WTC11 (cell line): ENCODE measurements at regions of chr17 and their contacts with region 1.

Region 1: DNA sequence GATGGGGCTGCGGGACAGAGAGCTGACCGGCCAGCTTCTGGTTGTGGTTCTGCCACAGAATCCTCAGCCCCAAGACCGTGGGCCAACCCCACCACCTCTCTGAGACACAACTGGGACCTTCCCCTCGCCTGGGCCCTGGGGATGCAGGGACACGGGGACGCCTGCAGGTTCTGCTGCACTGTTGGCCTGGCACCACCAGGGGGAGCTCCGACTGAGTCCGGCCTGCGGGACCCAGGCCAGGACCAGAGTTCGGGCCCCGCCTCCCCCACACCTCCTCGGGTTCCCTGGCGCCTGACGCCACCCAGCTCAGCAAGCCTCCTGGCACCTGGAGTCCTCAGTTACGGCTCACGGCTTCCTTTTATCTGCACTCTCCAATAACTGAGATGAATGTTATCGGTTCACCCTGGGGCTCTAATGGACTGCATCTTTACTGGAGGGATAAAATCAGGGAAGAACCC is 27.3 kb downstream of the TBC1D16 start:
- DNase-seq: peak; percentile 94
- ATAC-seq: peak; percentile 87
- H3K4me3 Mint-ChIP-seq: no peak overlapping the region
- H3K27ac Mint-ChIP-seq: no peak overlapping the region
- H3K4me1 Mint-ChIP-seq: peaks cover 5% of the 10 kb centered on the region
- H3K27me3 Mint-ChIP-seq: no peaks in the 10 kb centered on the region
- CTCF ChIP-seq: peak; percentile 94

Region 2: DNA sequence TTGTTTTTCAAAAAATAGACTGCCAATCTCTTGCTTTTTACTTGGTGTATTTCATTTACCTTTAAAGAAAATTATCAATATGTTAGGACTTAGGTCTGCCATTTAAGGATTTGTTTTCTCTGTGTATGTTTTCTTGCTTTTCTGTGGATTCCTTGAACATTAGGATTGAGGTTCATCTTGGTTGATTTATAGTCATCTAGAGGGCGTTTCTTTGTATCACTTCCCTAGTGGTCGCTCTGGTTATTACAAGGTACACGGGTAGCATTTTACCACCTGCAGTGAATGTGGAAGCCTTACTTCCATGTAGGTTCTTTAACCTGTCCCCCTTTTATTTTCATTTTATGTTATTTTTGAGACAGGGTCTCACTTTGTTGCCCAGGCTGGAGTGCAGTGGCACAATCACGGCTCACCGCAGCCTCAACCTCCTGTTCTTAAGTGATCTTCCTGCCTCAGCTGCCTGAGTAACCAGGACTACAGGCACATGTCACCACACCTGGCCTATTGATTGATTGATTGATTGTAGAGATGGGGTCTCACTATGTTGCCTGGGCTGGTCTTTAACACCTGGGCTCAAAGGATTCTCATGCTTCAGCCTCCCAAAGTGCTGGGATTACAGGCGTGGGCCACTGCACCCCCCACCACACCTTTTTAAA is 134.0 kb before region 1 on chr17:
- CTCF ChIA-PET with region 1: no interaction called
- POLR2A ChIA-PET with region 1: no interaction called
- DNase-seq: no peak
- ATAC-seq: peak; percentile 62; the same call in 1 of the 2 replicates
- H3K4me3 Mint-ChIP-seq: no peak overlapping the region
- H3K27ac Mint-ChIP-seq: no peak overlapping the region
- H3K4me1 Mint-ChIP-seq: peaks cover 6% of the 10 kb centered on the region; the same call in 1 of the 2 replicates
- H3K27me3 Mint-ChIP-seq: peaks cover 4% of the 10 kb centered on the region; the same call in 1 of the 2 replicates
- CTCF ChIP-seq: no peak; the same call in 1 of the 2 replicates

Region 3: GRCh38 chr17:79977708-79978547 is 30.5 kb before region 1 on chr17:
- CTCF ChIA-PET with region 1: interaction called, 13 read pairs
- POLR2A ChIA-PET with region 1: interaction called, 4 read pairs
- DNase-seq: no peak
- ATAC-seq: no peak
- H3K4me3 Mint-ChIP-seq: no peak overlapping the region
- H3K27ac Mint-ChIP-seq: no peak overlapping the region
- H3K4me1 Mint-ChIP-seq: peaks cover 15% of the 10 kb centered on the region
- H3K27me3 Mint-ChIP-seq: no peaks in the 10 kb centered on the region
- CTCF ChIP-seq: no peak

Region 4: DNA sequence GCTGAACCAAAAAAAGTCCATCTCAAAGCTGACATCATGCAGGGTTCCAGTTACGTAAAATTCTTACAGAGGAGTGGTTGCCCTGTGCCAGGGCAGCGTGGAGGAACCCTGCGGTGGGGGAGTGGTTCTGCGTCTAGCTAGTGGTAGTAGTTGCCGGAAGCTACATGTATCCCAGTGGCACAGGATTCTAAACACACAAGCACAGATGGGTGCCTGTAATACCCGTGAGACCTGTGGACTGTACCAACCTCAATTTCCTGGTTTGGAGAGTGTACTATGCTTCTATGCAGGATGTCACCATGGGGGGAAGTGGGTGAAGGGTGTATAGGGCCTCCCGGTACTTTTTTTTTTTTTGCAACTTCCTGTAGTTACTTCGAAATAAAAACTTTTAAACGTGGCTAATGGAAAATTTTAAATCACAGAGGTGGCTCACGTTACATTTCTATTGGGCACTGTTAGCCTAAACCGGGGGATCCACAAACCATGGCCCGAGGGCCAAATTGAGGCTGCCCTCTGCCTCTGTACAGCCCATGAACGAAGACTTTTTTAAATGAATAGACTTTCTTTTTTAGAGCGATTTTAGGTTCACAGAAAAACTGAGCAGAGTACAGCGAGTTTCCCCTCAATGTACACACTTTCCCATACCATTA is 11.3 kb before region 1 on chr17:
- CTCF ChIA-PET with region 1: interaction called, 42 read pairs
- POLR2A ChIA-PET with region 1: interaction called, 5 read pairs
- DNase-seq: no peak
- ATAC-seq: no peak; the same call in 1 of the 2 replicates
- H3K4me3 Mint-ChIP-seq: no peak overlapping the region
- H3K27ac Mint-ChIP-seq: peak overlapping the region; percentile 15; the same call in 1 of the 2 replicates
- H3K4me1 Mint-ChIP-seq: peaks cover 30% of the 10 kb centered on the region
- H3K27me3 Mint-ChIP-seq: no peaks in the 10 kb centered on the region
- CTCF ChIP-seq: no peak

Region 5: GRCh38 chr17:80029258-80029974 is 21.0 kb after region 1 on chr17:
- CTCF ChIA-PET with region 1: interaction called, 36 read pairs
- POLR2A ChIA-PET with region 1: interaction called, 3 read pairs
- DNase-seq: no peak
- ATAC-seq: no peak
- H3K4me3 Mint-ChIP-seq: no peak overlapping the region
- H3K27ac Mint-ChIP-seq: peak overlapping the region; percentile 63
- H3K4me1 Mint-ChIP-seq: peaks cover 43% of the 10 kb centered on the region
- H3K27me3 Mint-ChIP-seq: no peaks in the 10 kb centered on the region
- CTCF ChIP-seq: no peak

Region 6: GRCh38 chr17:80101011-80101945 is 92.9 kb after region 1 on chr17 and contains the start of gene GAA:
- CTCF ChIA-PET with region 1: interaction called, 16 read pairs
- POLR2A ChIA-PET with region 1: no interaction called
- DNase-seq: peak; percentile 82
- ATAC-seq: peak; percentile 76
- H3K4me3 Mint-ChIP-seq: peak within 1 kb of the TSS; percentile 92
- H3K27ac Mint-ChIP-seq: peak within 1 kb of the TSS; percentile 68; the same call in 1 of the 2 replicates
- H3K4me1 Mint-ChIP-seq: peaks cover 17% of the 10 kb centered on the region
- H3K27me3 Mint-ChIP-seq: peaks cover 12% of the 10 kb centered on the region
- CTCF ChIP-seq: peak; percentile 65
- total RNA-seq, gene GAA: 91.6 to 97.7 TPM (median 93.9 TPM) in 3 replicates